ENCODE measurements at regions of chr4 and their contacts with region 1.

Region 1: DNA sequence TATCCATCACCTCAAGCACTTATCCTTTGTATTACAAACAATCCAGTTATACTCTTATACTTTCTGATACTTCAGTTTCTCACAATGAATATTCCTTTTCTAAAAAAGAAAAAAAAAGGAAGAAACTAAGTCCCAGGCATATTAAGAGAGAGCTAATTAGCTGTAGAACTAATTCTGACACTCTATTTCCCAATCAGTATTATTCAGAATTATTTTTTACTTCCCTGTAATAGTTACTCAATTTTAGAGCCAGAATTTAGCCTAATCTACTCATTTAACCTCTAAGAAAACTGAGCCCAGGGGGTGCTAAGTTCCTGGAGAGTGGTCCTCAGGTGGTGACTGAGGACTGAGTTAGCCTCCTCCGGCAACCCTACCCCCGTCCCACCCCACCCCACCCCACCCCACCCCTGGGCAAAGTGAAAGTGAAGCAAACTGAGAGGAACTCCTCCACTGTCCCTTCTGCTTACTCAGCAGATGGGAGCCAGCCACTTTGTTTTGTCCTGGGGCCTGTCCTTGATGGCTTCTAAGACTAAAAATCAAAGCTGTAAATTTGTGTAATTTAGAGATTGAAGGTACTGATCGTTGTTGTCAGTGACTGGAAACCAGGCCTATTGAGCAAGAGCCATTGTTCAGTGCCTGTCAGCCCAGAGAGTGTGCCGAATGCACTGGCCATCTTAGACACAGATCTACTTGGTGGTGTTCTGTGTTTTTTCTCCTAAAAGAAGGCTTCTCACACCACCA is 162.1 kb downstream of the CBR4 start:
- DNase-seq: no peak
- H3K4me3 Mint-ChIP-seq: no peak overlapping the region
- H3K27ac Mint-ChIP-seq: peak overlapping the region; percentile 17
- H3K4me1 Mint-ChIP-seq: peaks cover 26% of the 10 kb centered on the region
- H3K27me3 Mint-ChIP-seq: peaks cover 8% of the 10 kb centered on the region

Region 2: GRCh38 chr4:168831919-168832762 is 15.8 kb before region 1 on chr4:
- CTCF ChIA-PET with region 1: interaction called, 12 read pairs
- POLR2A ChIA-PET with region 1: no interaction called
- DNase-seq: peak; percentile 57
- H3K4me3 Mint-ChIP-seq: peak overlapping the region; percentile 75
- H3K27ac Mint-ChIP-seq: no peak overlapping the region
- H3K4me1 Mint-ChIP-seq: peaks cover 16% of the 10 kb centered on the region
- H3K27me3 Mint-ChIP-seq: peaks cover 55% of the 10 kb centered on the region

Measured in activated CD4-positive, alpha-beta T cell treated with anti-CD3 and anti-CD28 coated beads, Interleukin-2, amount 10 ng/mL, durations not matched to agents 7 days and 5 days (primary cell).